ENCODE measurements at regions of chr15 and their contacts with region 1.

Region 1: GRCh38 chr15:42056934-42057779 is 36.3 kb upstream of the PLA2G4E start:
- DNase-seq: peak; percentile 82
- CTCF ChIP-seq: peak; percentile 71

Region 2: DNA sequence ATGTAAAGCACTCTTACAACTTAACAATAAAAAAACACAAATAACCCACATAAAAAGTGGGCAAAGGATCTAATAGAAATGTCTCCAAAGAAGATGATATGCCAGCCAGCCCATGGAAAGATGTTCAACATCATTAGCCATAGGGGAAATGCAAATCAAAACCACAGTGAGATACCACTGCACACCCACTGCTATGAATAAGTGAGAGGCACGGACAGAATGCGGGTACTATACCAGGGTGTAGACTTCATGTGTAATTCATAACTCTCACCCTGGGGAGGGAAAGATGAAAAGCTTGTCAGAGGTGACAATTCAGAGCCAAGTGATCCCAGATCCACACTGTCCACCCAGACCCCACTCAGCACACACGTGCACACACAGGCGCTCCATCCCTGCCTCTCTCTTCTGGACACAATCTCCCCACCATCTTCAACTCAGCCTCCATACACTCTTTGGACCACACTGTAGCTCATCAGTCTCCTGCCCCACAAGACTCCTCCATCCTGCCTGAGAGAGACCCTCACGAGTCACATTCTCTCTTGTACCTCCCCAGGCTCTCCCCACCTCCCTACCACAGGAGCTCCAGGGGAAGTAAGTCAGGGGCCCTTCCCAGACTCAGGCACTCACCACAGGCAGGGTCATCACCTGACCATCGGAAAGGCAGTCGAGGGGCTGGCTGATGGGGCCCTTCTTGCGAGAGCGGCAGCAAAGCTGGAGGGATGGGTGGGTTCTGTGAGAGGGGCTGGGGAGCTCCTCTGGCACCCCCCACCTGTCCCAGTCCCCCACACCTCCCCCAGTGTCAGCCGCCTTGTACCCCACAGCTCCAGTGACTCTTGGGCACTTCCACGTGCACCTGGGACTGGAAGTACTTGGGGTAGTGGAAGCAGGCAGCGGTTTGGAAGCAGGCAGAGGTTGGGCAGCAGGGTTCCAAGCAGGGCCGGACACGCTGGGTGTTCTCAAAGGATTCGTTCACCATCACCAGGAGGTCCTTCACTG is 57.6 kb before region 1 on chr15:
- CTCF ChIA-PET with region 1: interaction called, 45 read pairs
- POLR2A ChIA-PET with region 1: no interaction called
- DNase-seq: no peak
- CTCF ChIP-seq: no peak

Region 3: DNA sequence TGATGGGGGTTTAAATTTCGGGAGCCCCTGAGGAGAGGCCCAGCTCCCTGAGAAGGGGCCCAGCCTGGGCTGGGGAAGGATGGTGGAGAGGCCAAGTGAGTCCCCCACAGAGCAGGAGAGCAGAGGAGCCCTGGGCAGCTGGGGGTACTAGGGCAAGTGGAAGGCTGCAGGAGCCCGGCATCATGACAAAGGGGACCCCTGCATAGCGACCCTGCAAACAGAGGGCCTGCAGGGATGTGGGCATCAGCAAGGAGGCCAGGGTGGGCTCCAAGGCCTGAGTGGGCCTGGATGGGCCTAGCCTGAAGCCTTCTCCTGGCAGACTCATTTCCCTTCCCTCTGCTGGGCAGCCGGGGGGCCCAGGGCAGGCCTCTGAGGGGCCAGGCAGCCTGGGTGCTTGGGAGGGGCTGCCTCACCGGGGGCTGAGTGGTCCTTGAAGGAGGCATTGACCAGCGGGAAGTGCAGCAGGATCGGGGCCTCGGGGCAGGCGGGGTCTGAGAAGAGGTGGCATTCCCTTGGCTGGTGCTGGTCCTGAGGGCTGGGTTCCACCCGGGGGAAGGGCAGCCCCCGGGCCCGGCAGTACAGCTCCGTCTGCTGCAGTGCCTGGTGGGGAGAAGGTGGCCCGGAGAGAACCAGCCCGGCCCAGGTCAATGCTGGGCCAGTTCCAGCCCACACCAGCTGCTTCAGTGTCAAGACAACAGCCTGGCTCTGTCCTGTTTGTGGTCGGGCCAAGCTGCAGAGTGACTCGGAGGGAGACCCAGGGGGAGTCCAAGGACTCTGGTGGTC is 12.5 kb after region 1 on chr15:
- CTCF ChIA-PET with region 1: interaction called, 25 read pairs
- POLR2A ChIA-PET with region 1: no interaction called
- DNase-seq: no peak
- CTCF ChIP-seq: no peak

Measured in GM10248 (cell line).